ENCODE measurements at regions of chr5 and their contacts with region 1.

Region 1: DNA sequence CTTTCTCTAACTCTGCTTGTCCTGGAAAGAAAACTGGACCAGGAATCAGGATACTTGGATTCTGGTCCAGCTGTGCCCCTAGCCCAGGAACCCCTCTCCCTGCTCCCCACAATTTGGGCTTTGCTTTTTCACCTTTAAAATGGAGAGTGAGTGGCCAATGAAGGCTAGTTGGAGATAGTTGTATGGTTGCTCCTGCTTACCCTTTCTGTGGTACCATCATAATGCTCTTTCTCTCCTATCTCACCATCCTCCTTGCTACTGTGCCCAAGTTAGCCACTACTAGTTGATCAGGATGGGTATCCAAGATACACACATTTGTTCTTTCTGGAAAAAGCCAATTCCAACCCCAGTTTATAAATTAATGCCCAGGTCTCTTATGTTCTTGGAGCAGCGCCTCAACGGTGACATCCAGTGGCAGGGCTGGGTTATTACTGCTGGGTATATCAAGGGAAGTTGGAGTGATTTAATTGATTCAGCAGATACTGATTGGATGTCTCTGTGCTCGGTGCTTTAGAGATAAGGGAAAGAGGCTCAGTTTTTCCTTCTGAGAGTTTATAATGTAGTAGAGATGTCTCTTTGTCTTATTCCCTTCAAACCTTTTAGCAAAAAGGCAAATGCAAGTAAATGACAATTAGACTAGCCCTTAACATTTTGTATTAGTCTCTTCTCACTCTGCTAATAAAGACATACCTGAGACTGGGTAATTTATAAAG is 38.6 kb downstream of the FAXDC2 start:
- DNase-seq: peak; percentile 86
- H3K4me3 ChIP-seq: no peak overlapping the region
- H3K27ac ChIP-seq: peak overlapping the region; percentile 31 to 74 (median 52)
- H3K4me1 ChIP-seq: peaks cover 0 to 44% (median 34%) of the 10 kb centered on the region in 6 donors
- H3K27me3 ChIP-seq: no peaks in the 10 kb centered on the region
- CTCF ChIP-seq: peak; percentile 68 to 89 (median 85)
- POLR2A ChIP-seq: no peak

Region 2: DNA sequence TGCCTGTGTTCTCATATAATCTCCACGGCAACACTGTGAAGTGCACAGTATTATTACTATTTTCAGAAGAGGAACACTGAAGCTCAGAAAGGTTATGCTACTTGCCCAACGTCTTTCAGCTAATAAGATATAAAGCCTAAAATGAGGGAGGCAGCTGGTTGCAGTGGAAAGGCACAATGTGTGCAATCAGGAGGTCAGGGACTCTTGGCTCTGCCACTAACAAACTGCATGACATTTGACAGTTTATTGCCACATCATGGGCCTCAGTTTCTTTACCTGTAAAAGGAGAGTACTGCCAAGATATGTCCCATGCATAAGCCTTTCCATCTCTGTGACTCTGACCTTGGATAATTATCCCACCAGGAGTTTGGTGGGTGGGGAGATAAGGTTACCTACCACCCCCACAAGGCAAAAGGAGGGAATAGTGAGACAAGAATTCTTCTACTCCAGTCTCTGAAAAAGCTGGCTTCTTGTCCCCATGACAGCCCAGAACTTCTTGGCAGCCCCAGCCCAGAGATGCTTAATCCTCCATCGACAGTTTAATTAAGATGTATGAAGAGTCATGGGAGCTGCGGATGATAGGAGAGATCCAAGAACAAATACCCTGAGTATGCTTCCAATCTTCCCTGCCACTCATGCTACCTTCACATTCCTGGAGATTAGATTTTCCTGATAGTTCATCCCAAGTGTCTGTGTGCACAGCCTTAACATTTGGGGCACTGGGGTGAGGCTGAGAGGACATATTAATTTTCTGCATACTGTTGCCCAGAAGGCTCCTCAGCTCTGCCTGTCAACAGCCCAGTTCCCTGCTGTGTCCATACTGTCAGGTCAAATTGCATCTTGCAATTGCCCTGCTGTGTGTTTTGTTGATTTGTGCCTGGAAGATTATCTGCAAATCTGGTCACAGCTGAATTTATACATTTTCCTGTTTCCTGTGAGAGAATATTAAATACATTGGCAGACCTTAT is 1044.3 kb before region 1 on chr5:
- intact Hi-C with region 1: no loop called
- DNase-seq: no peak
- H3K4me3 ChIP-seq: no peak overlapping the region
- H3K27ac ChIP-seq: no peak overlapping the region
- H3K4me1 ChIP-seq: no peaks in the 10 kb centered on the region
- H3K27me3 ChIP-seq: no peaks in the 10 kb centered on the region
- CTCF ChIP-seq: no peak
- POLR2A ChIP-seq: no peak

Region 3: GRCh38 chr5:154647114-154647760 is 164.6 kb before region 1 on chr5:
- intact Hi-C with region 1: loop called (anchors 2 kb)
- DNase-seq: peak; percentile 79
- H3K4me3 ChIP-seq: peak overlapping the region; percentile 1 to 67 (median 35)
- H3K27ac ChIP-seq: no peak overlapping the region
- H3K4me1 ChIP-seq: peaks cover 0 to 25% (median 18%) of the 10 kb centered on the region in 6 donors
- H3K27me3 ChIP-seq: peaks cover 0 to 28% (median 2%) of the 10 kb centered on the region in 7 donors
- CTCF ChIP-seq: no peak
- POLR2A ChIP-seq: no peak

Region 4: GRCh38 chr5:155004138-155004744 is 192.4 kb after region 1 on chr5:
- intact Hi-C with region 1: no loop called
- DNase-seq: no peak
- H3K4me3 ChIP-seq: no peak overlapping the region
- H3K27ac ChIP-seq: no peak overlapping the region
- H3K4me1 ChIP-seq: no peaks in the 10 kb centered on the region
- H3K27me3 ChIP-seq: peaks cover 0 to 6% (median 0%) of the 10 kb centered on the region in 7 donors
- CTCF ChIP-seq: peak in 9 of 11 experiments; percentile 8 to 57 (median 43)
- POLR2A ChIP-seq: no peak

Measured in spleen (tissue), 13 donors.